K562 (cell line): ENCODE measurements at regions of chr1 and their contacts with region 1.

Region 1: DNA sequence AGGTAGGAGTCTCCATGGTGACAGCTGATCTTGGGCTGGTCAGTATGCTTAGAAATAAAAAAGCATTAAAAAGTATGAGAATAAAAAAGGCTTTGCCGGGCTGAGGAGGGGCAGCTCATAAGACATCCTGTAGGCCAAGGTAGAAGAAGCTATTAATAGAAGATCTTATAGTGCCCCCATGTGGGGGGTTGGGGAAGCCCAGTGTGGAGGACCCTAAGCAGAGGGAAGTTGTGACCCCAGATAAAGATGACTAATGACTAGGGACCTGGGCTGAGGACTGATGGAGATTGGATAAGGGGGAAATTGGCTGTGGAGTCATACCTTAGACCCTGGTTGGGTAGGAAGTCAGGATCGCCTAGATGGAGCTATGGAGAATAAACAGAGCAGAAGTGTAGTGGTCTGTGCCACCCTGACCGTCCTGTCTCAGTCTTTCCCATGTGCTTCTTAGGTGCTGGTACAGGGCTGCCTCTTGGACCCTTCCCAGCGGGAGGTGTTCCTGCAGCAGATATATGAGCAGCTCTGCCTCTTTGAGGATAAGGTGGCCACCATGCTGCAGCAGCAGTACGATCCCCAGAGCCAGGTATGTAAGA is 25.0 kb downstream of the SZT2 start:
- DNase-seq: peak; percentile 82 to 92 (median 90)
- ATAC-seq: peak; percentile 99
- H3K4me3 ChIP-seq: no peak overlapping the region
- H3K27ac ChIP-seq: no peak overlapping the region
- H3K4me1 ChIP-seq: no peaks in the 10 kb centered on the region; a peak in 1 of 5 replicates
- H3K27me3 ChIP-seq: no peaks in the 10 kb centered on the region
- CTCF ChIP-seq: peak; percentile 79 to 95 (median 93)
- EP300 ChIP-seq: no peak
- POLR2A ChIP-seq: no peak
- RAD21 ChIP-seq: peak; percentile 90 to 95

Region 2: DNA sequence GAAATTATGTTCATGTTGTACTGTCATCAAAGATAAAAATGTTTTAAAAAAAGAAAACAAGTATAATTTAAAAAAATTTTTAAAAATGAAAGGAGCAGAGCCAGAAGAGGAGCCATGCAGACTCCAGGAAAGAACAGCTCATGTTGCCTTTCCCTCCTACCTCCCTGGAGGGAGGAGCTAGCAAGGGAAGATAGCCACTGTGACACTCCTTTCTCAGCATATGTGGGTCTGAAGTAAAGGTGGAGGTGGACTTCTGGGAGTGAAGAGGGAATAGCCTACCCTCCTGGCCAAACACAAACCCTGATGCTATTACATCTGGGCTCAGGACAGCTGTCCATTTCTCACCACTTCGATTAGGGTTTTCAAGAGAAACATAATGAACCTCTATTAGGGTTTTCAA is 510.3 kb before region 1 on chr1:
- CTCF ChIA-PET with region 1: no interaction called
- POLR2A ChIA-PET with region 1: no interaction called
- in situ Hi-C with region 1: loop called (anchors 10 kb)
- intact Hi-C with region 1: no loop called
- DNase-seq: peak in 2 of 4 experiments; percentile 25 to 44
- ATAC-seq: peak; percentile 88
- H3K4me3 ChIP-seq: no peak overlapping the region
- H3K27ac ChIP-seq: no peak overlapping the region
- H3K4me1 ChIP-seq: no peaks in the 10 kb centered on the region
- H3K27me3 ChIP-seq: peaks cover 0 to 9% of the 10 kb centered on the region in 2 experiments; a peak in 2 of 5 replicates
- CTCF ChIP-seq: no peak
- EP300 ChIP-seq: no peak
- POLR2A ChIP-seq: no peak
- RAD21 ChIP-seq: no peak

Region 3: DNA sequence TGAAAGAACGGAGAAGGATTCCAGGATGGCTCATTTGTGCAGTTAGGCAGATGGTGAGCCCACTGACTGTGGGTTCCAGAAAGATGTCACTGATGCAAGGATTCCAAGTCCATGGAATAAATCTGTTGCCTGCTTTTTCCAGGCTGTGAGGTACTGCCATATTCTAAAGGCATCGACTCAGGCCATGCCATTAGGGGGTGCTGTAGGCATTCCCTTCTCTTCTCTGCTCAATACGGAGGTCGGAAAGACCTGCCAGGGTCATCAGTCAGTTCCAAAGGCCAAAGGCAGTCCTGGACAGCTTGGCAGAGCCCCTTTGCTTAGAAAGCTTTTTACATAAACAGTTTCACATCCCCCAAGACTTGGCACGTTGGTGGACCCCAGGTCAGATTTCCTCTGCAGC is 176.6 kb before region 1 on chr1:
- CTCF ChIA-PET with region 1: interaction called, 5 read pairs
- POLR2A ChIA-PET with region 1: interaction called, 3 read pairs
- in situ Hi-C with region 1: no loop called
- intact Hi-C with region 1: loop called (anchors 1 kb)
- DNase-seq: peak; percentile 38 to 79 (median 57)
- ATAC-seq: peak; percentile 94
- H3K4me3 ChIP-seq: no peak overlapping the region
- H3K27ac ChIP-seq: no peak overlapping the region
- H3K4me1 ChIP-seq: no peaks in the 10 kb centered on the region
- H3K27me3 ChIP-seq: peaks cover 22 to 66% of the 10 kb centered on the region in 2 experiments
- CTCF ChIP-seq: peak; percentile 79 to 88 (median 87)
- EP300 ChIP-seq: no peak
- POLR2A ChIP-seq: no peak
- RAD21 ChIP-seq: peak; percentile 87 to 95

Region 4: GRCh38 chr1:43376723-43377235 is 38.0 kb before region 1 on chr1:
- CTCF ChIA-PET with region 1: no interaction called
- POLR2A ChIA-PET with region 1: no interaction called
- in situ Hi-C with region 1: no loop called
- intact Hi-C with region 1: no loop called
- DNase-seq: no peak
- ATAC-seq: no peak
- H3K4me3 ChIP-seq: no peak overlapping the region
- H3K27ac ChIP-seq: no peak overlapping the region
- H3K4me1 ChIP-seq: peaks cover 0 to 11% of the 10 kb centered on the region in 2 experiments; a peak in 2 of 5 replicates
- H3K27me3 ChIP-seq: no peaks in the 10 kb centered on the region
- CTCF ChIP-seq: no peak
- EP300 ChIP-seq: no peak
- POLR2A ChIP-seq: no peak
- RAD21 ChIP-seq: no peak